ENCODE measurements at regions of chr17 and their contacts with region 1.

Region 1: DNA sequence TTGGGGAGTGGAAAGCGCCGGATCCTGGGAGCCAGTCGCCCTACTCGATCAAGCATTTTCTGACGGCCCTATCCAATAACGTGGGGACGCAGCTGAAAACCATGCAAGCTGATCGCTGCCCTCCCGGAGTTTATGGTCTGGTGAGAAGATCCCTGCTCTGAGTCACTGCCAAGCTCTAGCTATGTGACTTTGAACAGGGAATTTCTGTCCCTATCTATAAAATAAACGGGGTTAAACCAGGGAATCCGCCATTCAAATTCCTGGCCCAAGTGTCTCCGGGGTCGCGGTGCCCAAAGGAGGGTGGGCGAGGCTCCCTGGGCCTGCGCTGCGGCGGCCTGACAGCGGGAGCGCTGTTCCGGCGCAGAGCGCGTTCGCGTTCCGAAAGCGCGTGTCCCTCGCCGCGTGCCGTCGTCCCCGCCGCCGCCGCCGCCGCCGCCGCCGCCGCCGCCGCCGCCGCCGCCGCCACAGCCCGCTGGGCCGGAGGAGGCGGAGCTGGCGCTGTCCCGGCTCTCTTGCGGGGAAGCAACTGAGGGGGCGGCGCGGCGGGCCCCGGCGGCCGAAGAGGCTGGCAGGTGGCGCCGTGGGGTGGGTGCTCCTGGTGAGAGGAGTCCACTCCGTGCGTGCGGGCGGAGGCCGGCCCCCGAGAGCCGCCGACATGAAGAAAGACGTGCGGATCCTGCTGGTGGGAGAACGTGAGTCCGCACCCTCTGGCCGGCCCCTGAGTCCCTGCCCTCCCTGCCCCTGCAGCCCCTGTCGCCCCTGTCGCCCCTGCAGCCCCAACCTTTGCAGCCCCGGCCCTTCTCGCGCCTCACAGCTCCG is at the start of gene RHOT1:
- DNase-seq: peak; percentile 47 to 88 (median 72)
- ATAC-seq: peak; percentile 87
- H3K4me3 ChIP-seq: peak within 1 kb of the TSS; percentile 76 to 93
- H3K4me3 Mint-ChIP-seq: peak within 1 kb of the TSS; percentile 96
- H3K27ac ChIP-seq: peak within 1 kb of the TSS; percentile 39 to 68
- H3K27ac Mint-ChIP-seq: peak within 1 kb of the TSS; percentile 92
- H3K4me1 ChIP-seq: peaks cover 5% of the 10 kb centered on the region
- H3K4me1 Mint-ChIP-seq: peaks cover 30% of the 10 kb centered on the region
- H3K27me3 ChIP-seq: no peaks in the 10 kb centered on the region
- H3K27me3 Mint-ChIP-seq: no peaks in the 10 kb centered on the region
- CTCF ChIP-seq: peak; percentile 49
- total RNA-seq, gene RHOT1: 13.1 to 15.4 TPM

Region 2: GRCh38 chr17:31858642-31859473 is 283.4 kb before region 1 on chr17 and contains the start of gene COPRS:
- CTCF ChIA-PET with region 1: no interaction called
- POLR2A ChIA-PET with region 1: no interaction called
- intact Hi-C with region 1: no loop called
- DNase-seq: peak; percentile 53 to 88 (median 77)
- ATAC-seq: peak; percentile 92
- H3K4me3 ChIP-seq: peak within 1 kb of the TSS; percentile 53 to 69
- H3K4me3 Mint-ChIP-seq: peak within 1 kb of the TSS; percentile 86
- H3K27ac ChIP-seq: no peak within 1 kb of the TSS
- H3K27ac Mint-ChIP-seq: peak within 1 kb of the TSS; percentile 15
- H3K4me1 ChIP-seq: peaks cover 14% of the 10 kb centered on the region
- H3K4me1 Mint-ChIP-seq: peaks cover 16% of the 10 kb centered on the region
- H3K27me3 ChIP-seq: no peaks in the 10 kb centered on the region
- H3K27me3 Mint-ChIP-seq: no peaks in the 10 kb centered on the region
- CTCF ChIP-seq: no peak
- total RNA-seq, gene COPRS: 2.4 to 2.6 TPM

Region 3: DNA sequence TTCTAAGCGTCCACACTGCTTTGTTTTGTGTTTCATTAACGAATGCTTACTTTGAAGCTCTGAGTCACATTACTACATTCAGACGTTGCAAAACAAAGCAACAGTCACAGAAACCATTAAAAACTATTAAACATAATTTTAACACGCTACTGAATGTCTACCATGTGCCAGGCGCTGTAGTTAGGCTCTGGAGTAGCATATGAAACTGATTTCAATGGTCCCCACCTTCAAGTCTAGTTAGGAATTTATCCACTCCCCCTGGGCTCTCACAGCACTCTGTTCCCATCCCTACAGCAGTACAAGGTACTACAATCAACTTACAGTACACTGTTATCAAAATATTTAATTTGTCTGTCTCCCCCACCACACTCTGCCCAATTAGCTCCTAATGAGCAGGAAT is 241.4 kb before region 1 on chr17:
- CTCF ChIA-PET with region 1: interaction called, 5 read pairs
- POLR2A ChIA-PET with region 1: no interaction called
- intact Hi-C with region 1: loop called in 1 of 2 experiments (anchors 5 kb)
- DNase-seq: no peak
- ATAC-seq: no peak
- H3K4me3 ChIP-seq: peak overlapping the region; percentile 65 to 72
- H3K4me3 Mint-ChIP-seq: no peak overlapping the region
- H3K27ac ChIP-seq: peak overlapping the region; percentile 57 to 71
- H3K27ac Mint-ChIP-seq: no peak overlapping the region
- H3K4me1 ChIP-seq: peaks cover 10% of the 10 kb centered on the region
- H3K4me1 Mint-ChIP-seq: peaks cover 18% of the 10 kb centered on the region
- H3K27me3 ChIP-seq: no peaks in the 10 kb centered on the region
- H3K27me3 Mint-ChIP-seq: no peaks in the 10 kb centered on the region
- CTCF ChIP-seq: no peak

Region 4: DNA sequence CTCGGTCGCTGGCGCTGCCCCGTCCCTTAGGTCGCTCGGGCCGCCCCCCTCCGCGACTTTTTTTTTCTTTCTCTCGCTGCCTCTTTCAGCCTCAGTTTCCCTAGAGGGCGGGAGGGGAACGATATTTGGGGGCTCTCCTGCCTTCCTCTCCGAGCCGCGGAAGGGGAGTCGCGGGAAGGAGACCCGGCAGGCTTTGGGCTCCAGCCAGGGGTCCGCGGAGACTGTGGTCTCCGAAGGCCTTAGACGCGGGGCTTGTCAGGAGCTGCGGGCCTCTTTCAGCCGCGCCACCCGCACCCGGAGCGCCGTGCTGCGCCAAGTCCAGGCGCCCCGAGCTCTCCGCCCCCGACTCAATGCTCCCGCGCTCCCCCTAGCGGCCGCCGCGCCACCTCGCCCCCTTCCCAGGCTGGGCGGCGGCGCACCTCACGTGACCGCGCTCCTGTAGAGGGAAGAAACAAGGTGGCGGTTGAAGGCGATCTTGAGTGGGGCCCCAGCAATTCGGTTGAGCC is 135.2 kb before region 1 on chr17 and contains the start of gene LRRC37B:
- CTCF ChIA-PET with region 1: interaction called, 23 read pairs
- POLR2A ChIA-PET with region 1: interaction called, 4 read pairs
- intact Hi-C with region 1: loop called (anchors 1 to 2 kb)
- DNase-seq: peak; percentile 83 to 95 (median 90)
- ATAC-seq: peak; percentile 87
- H3K4me3 ChIP-seq: peak within 1 kb of the TSS; percentile 87 to 90
- H3K4me3 Mint-ChIP-seq: peak within 1 kb of the TSS; percentile 90
- H3K27ac ChIP-seq: peak within 1 kb of the TSS; percentile 49 to 60
- H3K27ac Mint-ChIP-seq: peak within 1 kb of the TSS; percentile 91
- H3K4me1 ChIP-seq: peaks cover 36% of the 10 kb centered on the region
- H3K4me1 Mint-ChIP-seq: peaks cover 30% of the 10 kb centered on the region
- H3K27me3 ChIP-seq: no peaks in the 10 kb centered on the region
- H3K27me3 Mint-ChIP-seq: no peaks in the 10 kb centered on the region
- CTCF ChIP-seq: peak; percentile 78
- total RNA-seq, gene LRRC37B: 80.1 to 88.3 TPM

Region 5: GRCh38 chr17:32127158-32127897 is 14.9 kb before region 1 on chr17:
- CTCF ChIA-PET with region 1: interaction called, 46 read pairs
- POLR2A ChIA-PET with region 1: interaction called, 7 read pairs
- intact Hi-C with region 1: loop called (anchors 1 to 2 kb)
- DNase-seq: peak; percentile 57 to 89 (median 83)
- ATAC-seq: peak; percentile 100
- H3K4me3 ChIP-seq: peak overlapping the region; percentile 71 to 99
- H3K4me3 Mint-ChIP-seq: peak overlapping the region; percentile 96
- H3K27ac ChIP-seq: peak overlapping the region; percentile 74 to 85
- H3K27ac Mint-ChIP-seq: peak overlapping the region; percentile 98
- H3K4me1 ChIP-seq: peaks cover 21% of the 10 kb centered on the region
- H3K4me1 Mint-ChIP-seq: peaks cover 22% of the 10 kb centered on the region
- H3K27me3 ChIP-seq: no peaks in the 10 kb centered on the region
- H3K27me3 Mint-ChIP-seq: no peaks in the 10 kb centered on the region
- CTCF ChIP-seq: no peak

Region 6: DNA sequence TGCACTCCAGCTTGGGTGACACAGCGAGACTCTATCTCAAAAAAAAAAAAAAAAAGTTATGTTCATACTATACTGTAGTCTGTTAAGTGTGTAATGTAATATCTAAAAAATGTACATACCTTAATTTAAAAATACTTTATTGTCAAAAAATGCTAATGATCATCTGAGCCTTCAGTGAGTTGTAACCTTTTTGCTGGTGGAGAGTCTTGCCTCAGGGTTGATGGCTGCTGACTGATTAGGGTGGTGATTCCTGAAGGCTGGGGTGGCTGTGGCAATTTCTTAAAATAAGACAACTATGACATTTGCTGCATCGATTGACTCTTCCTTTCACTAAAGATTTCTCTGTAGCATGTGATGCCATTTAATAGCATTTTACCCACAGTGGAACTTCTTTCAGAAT is 23.9 kb after region 1 on chr17:
- CTCF ChIA-PET with region 1: no interaction called
- POLR2A ChIA-PET with region 1: no interaction called
- intact Hi-C with region 1: no loop called
- DNase-seq: no peak
- ATAC-seq: no peak
- H3K4me3 ChIP-seq: no peak overlapping the region
- H3K4me3 Mint-ChIP-seq: no peak overlapping the region
- H3K27ac ChIP-seq: no peak overlapping the region
- H3K27ac Mint-ChIP-seq: no peak overlapping the region
- H3K4me1 ChIP-seq: no peaks in the 10 kb centered on the region
- H3K4me1 Mint-ChIP-seq: peaks cover 2% of the 10 kb centered on the region
- H3K27me3 ChIP-seq: no peaks in the 10 kb centered on the region
- H3K27me3 Mint-ChIP-seq: no peaks in the 10 kb centered on the region
- CTCF ChIP-seq: no peak

Region 7: DNA sequence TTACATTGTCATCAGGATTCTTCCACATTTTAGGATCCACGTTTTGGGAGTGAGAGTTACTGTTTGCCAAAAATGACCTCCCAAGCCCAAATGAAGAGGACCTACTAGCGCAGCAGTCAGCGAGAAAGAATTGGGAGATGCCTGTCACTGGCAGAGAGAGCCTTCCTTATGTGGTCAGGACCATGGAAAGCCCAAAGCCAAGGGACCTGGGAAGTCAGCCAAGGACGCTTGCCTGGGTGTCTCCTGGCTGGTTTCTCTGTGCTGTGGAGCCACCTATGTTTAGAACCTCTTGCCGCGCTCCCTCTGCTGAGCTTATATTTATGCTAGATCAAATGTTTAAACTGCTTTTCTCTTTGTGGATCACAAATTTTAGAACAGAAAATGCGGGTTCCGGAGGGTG is 98.5 kb after region 1 on chr17:
- CTCF ChIA-PET with region 1: no interaction called
- POLR2A ChIA-PET with region 1: no interaction called
- intact Hi-C with region 1: no loop called
- DNase-seq: no peak
- ATAC-seq: no peak
- H3K4me3 ChIP-seq: no peak overlapping the region
- H3K4me3 Mint-ChIP-seq: no peak overlapping the region
- H3K27ac ChIP-seq: no peak overlapping the region
- H3K27ac Mint-ChIP-seq: no peak overlapping the region
- H3K4me1 ChIP-seq: no peaks in the 10 kb centered on the region
- H3K4me1 Mint-ChIP-seq: no peaks in the 10 kb centered on the region
- H3K27me3 ChIP-seq: no peaks in the 10 kb centered on the region
- H3K27me3 Mint-ChIP-seq: no peaks in the 10 kb centered on the region
- CTCF ChIP-seq: no peak

Region 8: GRCh38 chr17:32349854-32350665 is 207.8 kb after region 1 on chr17 and contains the start of gene ZNF207:
- CTCF ChIA-PET with region 1: no interaction called
- POLR2A ChIA-PET with region 1: no interaction called
- intact Hi-C with region 1: loop called (anchors 10 kb)
- DNase-seq: peak; percentile 90 to 99 (median 94)
- ATAC-seq: peak; percentile 98
- H3K4me3 ChIP-seq: peak within 1 kb of the TSS; percentile 94 to 97
- H3K4me3 Mint-ChIP-seq: peak within 1 kb of the TSS; percentile 96
- H3K27ac ChIP-seq: peak within 1 kb of the TSS; percentile 90 to 99
- H3K27ac Mint-ChIP-seq: peak within 1 kb of the TSS; percentile 98
- H3K4me1 ChIP-seq: peaks cover 34% of the 10 kb centered on the region
- H3K4me1 Mint-ChIP-seq: peaks cover 34% of the 10 kb centered on the region
- H3K27me3 ChIP-seq: no peaks in the 10 kb centered on the region
- H3K27me3 Mint-ChIP-seq: no peaks in the 10 kb centered on the region
- CTCF ChIP-seq: no peak
- total RNA-seq, gene ZNF207: 276 to 277 TPM